ENCODE measurements at regions of chr10 and their contacts with region 1.

Region 1: DNA sequence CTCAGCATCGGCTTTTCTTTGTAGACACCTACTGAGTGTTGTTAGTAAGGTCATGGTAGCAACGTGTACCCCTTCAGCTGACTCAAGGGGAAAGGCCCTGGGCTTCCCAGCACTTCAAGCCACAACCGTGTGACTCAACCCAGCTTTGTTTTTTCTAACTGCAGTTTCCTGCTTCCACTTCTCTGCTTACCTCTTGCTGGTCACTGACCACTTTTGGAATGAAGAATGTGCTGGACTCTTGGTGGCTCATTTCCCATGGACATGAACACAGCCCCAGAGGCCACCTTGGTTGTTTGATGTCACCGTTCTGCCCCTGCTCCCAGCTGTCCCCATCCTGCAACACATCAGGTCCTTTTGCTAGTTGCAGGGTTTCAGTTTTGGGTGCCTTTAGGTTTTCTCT is 69.5 kb upstream of the ZNF438 start:
- DNase-seq: no peak
- ATAC-seq: peak; percentile 91
- H3K4me3 Mint-ChIP-seq: no peak overlapping the region
- H3K27ac Mint-ChIP-seq: peak overlapping the region; percentile 59
- H3K4me1 Mint-ChIP-seq: peaks cover 21% of the 10 kb centered on the region
- H3K27me3 Mint-ChIP-seq: peaks cover 2% of the 10 kb centered on the region
- CTCF ChIP-seq: no peak

Region 2: GRCh38 chr10:31090894-31091607 is 10.1 kb before region 1 on chr10:
- CTCF ChIA-PET with region 1: no interaction called
- POLR2A ChIA-PET with region 1: interaction called, 10 read pairs
- intact Hi-C with region 1: loop called (anchors 1 kb)
- DNase-seq: no peak
- ATAC-seq: peak; percentile 89
- H3K4me3 Mint-ChIP-seq: peak overlapping the region; percentile 2
- H3K27ac Mint-ChIP-seq: peak overlapping the region; percentile 64
- H3K4me1 Mint-ChIP-seq: peaks cover 13% of the 10 kb centered on the region
- H3K27me3 Mint-ChIP-seq: no peaks in the 10 kb centered on the region
- CTCF ChIP-seq: no peak

Region 3: DNA sequence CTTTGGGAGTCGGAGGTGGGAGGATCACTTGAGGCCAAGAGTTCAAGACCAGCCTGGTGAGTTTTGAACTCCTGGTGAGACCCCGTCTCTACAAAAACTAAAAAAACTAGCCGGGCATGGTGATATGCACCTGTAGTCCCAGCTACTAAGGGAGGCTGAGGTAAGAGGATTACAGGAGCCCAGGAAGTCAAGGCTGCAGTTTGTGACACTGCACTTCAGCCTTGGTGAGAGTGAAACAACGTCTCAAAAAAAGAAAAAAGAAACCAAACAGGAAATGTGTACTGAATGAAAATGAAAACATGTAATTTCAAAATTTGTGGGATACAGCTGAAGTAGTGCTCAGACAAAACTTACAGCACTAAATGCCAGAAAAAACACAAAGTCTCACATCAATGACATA is 819.9 kb after region 1 on chr10:
- CTCF ChIA-PET with region 1: no interaction called
- POLR2A ChIA-PET with region 1: no interaction called
- intact Hi-C with region 1: no loop called
- DNase-seq: no peak
- ATAC-seq: no peak
- H3K4me3 Mint-ChIP-seq: no peak overlapping the region
- H3K27ac Mint-ChIP-seq: no peak overlapping the region
- H3K4me1 Mint-ChIP-seq: peaks cover 60% of the 10 kb centered on the region
- H3K27me3 Mint-ChIP-seq: no peaks in the 10 kb centered on the region
- CTCF ChIP-seq: no peak

Measured in activated B cell treated with CpG ODN at 0.5 μM for 24 hours (primary cell).